Ascending aorta (tissue), 2 donors: ENCODE measurements at regions of chr22 and their contacts with region 1.

Region 1: DNA sequence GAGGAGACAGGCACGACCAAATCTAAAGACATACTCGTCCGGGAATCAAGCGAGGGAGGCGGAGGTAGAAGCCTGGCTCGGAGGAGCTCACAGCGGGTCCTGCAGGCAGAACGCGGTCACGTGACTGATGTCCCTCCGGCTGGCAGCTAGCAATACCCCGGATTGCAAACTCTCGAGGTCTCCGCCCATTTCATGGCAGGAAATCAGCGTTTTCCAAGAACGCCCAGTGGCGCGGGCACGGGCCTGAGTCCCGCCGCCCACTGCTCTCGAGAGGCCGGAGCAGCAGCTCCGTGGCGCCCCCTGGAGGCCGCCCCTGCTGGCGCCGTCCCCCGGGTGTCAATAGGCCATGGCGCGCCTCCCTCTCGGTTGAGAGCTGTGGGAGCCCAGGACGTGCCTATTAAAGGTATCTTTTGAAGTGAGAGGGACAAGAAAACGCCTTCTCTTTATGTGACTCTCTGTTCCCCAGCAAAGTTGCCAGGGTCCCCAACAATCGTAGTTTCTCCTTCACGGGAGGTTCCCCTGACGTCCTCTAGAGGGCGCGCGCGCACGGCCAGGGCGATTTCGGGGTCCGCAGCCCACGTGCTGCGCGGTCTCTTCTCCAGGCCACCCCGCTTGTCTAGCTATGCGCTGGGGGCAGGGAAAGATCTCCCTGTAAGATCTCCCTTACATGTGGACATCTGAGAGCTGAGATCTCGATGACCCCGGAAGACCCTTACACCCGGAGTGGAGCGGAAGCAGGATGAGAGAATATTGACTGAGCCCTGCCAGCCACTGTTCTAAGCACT is 37.3 kb upstream of the RBFOX2 start:
- DNase-seq: peak; percentile 77 to 97
- H3K4me3 ChIP-seq: peak overlapping the region; percentile 61 to 64
- H3K27ac ChIP-seq: peak overlapping the region; percentile 83 to 87
- H3K4me1 ChIP-seq: peaks cover 0 to 3% of the 10 kb centered on the region in 2 donors
- H3K27me3 ChIP-seq: no peaks in the 10 kb centered on the region
- CTCF ChIP-seq: peak; percentile 99 to 100 (median 99)

Region 2: GRCh38 chr22:35930933-35931332 is 135.0 kb before region 1 on chr22:
- intact Hi-C with region 1: loop called (anchors 1 kb)
- DNase-seq: no peak
- H3K4me3 ChIP-seq: no peak overlapping the region
- H3K27ac ChIP-seq: no peak overlapping the region
- H3K4me1 ChIP-seq: no peaks in the 10 kb centered on the region
- H3K27me3 ChIP-seq: no peaks in the 10 kb centered on the region
- CTCF ChIP-seq: peak; percentile 56 to 72 (median 71)

Region 3: DNA sequence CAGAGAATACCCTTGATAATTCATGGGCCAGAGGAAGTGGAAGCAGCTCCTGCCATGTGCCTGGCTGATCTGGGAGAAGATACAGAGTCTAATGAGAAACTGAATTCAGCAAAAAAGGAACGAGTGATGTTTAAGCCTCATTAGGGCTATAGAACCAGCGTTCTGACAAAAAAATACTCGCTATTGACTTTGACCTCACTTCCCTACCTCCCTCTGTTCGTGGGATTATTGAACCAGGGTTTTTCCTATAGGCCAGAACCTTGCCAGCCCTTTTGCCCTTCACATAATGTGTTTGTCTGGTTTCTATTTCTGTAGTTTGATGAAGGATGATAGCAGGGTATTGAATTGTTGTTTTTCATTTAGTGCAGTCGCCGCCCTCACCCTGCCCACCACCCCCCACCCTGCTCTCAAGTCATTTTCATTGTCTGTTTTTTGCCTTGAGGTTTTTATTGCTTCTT is 29.8 kb before region 1 on chr22:
- intact Hi-C with region 1: no loop called
- DNase-seq: no peak
- H3K4me3 ChIP-seq: no peak overlapping the region
- H3K27ac ChIP-seq: no peak overlapping the region
- H3K4me1 ChIP-seq: no peaks in the 10 kb centered on the region
- H3K27me3 ChIP-seq: no peaks in the 10 kb centered on the region
- CTCF ChIP-seq: no peak